ENCODE measurements at regions of chr10 and their contacts with region 1.

Region 1: DNA sequence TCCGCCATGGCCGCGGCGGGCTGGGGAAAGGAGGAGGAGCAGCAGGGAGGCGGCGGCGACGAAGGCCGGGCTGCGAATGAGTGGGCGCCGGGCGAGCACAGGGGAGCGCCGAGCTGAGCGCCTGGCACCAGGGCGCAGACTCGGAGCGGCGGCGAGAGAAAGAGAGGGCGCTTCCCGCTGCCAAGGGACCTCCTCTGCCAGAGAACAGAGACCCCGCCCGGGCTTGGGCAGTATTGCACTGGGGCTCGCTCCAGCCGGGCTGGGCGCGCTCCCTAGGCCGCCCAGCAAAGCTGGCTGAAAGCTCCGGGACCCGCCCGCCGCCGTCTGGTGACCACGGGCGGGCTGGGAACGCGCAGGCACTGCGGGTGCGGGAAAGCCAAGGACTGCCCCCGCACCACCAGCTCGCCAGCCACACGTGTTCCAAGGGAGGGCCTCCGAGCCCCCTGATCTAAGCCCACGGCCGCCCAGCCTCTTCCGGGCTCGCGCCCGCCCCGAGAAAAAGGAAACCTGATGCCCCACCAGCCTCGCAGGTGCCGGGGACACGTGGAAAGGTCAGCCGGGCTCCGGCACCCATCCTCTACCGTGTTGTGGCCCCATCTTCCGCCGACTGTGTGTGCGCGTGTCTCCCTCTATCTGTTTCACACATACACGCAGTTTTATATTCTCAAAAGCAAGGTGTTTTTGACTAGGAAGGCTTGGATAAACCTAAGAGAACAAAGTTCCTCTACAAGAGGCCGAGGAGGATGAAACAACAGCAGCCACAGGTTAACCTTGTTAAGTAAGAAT is at the start of gene CCDC6:
- DNase-seq: peak; percentile 87
- CTCF ChIP-seq: peak; percentile 71

Region 2: DNA sequence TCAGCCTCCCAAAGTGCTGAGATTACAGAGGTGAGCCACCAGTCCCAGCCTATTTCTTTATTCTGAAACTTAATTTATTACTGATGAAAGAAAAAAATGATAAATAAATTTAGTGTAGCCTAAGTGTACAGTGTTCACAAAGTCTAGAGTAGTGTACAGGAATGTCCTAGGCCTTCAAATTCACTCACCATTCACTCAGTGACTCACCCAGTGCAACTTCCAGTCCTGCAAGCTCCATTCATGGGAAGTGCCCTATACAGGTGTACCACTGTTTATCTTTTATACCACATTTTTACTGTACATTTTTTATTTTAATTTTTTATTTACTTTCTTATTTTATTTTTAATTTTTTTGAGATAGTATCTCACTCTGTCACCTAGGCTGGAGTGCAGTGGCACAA is 165.6 kb before region 1 on chr10:
- CTCF ChIA-PET with region 1: no interaction called
- POLR2A ChIA-PET with region 1: no interaction called
- DNase-seq: no peak
- CTCF ChIP-seq: no peak

Region 3: GRCh38 chr10:59793919-59794318 is 112.7 kb before region 1 on chr10:
- CTCF ChIA-PET with region 1: no interaction called
- POLR2A ChIA-PET with region 1: no interaction called
- DNase-seq: no peak
- CTCF ChIP-seq: no peak

Region 4: DNA sequence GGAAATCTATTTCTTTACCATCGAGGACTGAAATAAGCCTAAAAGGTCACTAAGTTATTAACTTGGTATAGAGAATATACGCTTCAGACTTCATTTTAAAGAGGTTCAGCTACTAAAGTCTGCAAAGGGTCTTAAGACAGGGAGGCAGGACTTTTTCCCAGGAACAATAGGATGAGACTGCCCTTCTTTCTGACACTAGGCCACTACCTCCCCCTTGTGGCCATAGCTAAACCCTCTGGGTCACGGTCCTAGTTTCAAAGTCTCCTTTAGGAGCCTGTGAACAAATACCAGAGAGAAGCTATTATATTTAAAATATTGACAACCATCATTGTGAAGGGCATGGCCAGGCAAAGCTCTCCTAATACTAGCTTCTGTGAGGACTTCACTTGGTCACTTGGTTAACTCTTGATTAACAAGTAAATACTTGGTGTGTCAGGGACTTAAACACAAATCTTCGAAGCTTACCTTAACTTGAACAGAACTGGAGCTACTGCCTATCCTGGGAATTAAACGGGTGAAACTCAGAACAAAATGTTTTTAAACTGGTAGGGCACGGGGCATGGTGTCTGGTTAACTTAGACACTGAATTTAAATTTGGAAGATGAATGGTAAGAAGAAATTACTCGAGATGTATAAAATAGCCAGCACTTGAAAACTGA is 75.9 kb before region 1 on chr10:
- CTCF ChIA-PET with region 1: interaction called, 50 read pairs
- POLR2A ChIA-PET with region 1: no interaction called
- DNase-seq: no peak
- CTCF ChIP-seq: peak; percentile 58

Region 5: DNA sequence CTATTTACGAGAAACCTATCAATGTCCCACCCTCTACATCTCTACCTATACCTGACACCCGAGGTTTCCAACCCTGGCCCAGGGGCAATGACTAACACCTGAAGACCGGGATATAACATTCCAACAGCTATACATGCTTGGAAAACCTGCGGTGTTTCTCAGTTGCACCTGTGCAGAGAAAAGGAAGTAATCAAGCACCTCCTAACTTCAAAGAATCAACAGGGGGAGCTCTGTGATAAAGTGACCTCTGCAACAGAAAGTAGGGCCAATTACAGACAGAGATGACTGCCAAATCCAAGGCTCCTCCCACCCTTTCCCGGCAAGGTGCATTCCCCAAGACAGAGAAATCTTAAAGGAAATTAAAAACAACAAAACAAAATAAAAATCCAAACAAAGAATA is 41.5 kb before region 1 on chr10:
- CTCF ChIA-PET with region 1: interaction called, 73 read pairs
- POLR2A ChIA-PET with region 1: no interaction called
- DNase-seq: peak; percentile 37
- CTCF ChIP-seq: peak; percentile 50

Region 6: DNA sequence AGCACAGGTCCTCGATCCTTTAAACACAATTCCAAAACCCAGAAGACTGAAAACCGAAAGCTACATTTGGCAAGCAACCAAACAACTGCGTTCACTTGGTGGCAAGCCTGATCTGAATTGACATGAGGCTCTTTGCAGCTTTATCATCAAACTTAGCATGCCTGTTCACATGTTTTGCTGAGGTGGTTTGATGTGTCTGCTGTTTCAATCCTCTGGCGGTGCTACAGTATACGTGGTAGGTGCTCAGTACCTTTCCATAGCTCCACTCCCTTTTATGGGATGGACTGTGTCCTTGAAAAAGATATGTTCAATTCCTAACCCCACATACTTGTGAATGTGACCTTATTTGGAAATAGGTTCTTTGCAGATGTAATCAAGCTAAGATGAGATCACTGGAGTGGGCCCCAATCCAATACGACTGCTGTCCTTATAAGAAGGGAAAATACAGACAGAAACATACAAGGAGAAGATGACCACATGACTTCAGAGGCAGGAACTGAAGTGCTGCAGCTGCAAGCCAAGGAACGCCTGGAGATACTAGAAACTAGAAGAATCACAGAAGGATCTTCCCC is 33.6 kb before region 1 on chr10:
- CTCF ChIA-PET with region 1: interaction called, 73 read pairs
- POLR2A ChIA-PET with region 1: no interaction called
- DNase-seq: no peak
- CTCF ChIP-seq: no peak

Region 7: DNA sequence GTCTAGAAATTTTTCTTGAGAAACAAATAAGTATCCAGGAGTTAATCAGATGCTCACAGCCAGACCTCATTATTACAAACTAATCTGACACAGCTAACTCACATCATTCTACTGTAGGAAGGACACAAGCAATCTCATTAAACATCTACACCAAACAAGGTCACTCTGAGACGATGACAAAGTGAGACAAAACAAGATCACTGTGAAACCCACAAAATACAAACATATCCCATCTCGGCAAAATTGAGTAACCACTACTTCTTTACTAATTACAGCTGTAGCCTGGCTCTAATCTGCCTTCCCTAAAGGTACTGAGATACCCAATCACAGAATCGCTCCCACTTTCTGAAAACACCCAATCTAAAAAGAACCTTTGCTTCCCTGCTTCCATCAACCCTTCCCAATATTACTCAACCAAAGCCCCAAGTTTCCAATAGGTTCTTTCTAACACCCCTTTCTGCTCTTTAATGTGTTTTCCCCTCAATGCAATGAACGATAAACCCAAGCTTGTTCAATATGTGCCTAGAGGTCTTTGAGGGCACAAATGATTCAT is 27.2 kb before region 1 on chr10:
- CTCF ChIA-PET with region 1: interaction called, 16 read pairs
- POLR2A ChIA-PET with region 1: no interaction called
- DNase-seq: no peak
- CTCF ChIP-seq: no peak

Region 8: DNA sequence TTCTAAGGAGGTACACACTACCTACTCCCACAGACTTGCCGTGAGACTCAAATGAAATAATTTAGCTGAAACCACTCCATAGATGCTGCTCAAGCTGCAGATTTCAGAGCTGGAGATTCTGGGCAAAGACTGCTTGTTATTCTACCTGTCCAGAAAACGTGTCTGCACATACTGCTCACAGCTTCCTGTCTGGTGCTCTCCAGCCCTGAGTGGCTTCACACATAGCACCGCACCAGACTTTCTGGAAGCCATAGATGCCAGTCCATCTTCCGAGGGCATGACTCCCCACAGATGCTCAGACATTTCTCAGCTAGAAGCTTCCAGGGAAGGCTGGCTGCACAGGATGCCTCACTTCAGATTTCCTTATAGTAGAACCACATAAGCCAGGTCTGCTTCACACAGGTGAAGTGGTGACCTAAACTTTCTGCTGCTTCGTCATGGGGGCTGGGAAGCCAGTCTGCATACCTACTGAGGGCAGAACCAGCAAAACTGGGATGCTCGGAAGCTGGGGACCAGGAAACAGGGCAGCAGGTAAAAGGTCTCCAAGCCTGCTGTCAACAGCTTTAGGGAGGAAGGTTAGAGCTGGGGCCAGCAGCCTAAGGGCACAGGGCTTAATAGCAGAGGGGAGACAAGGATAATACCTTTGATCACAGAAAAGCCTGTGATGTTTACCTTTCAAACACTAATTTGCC is 18.5 kb before region 1 on chr10:
- CTCF ChIA-PET with region 1: interaction called, 23 read pairs
- POLR2A ChIA-PET with region 1: no interaction called
- DNase-seq: no peak
- CTCF ChIP-seq: no peak

Region 9: GRCh38 chr10:59895629-59896116 is 10.9 kb before region 1 on chr10:
- CTCF ChIA-PET with region 1: interaction called, 17 read pairs
- POLR2A ChIA-PET with region 1: no interaction called
- DNase-seq: no peak
- CTCF ChIP-seq: no peak

Region 10: DNA sequence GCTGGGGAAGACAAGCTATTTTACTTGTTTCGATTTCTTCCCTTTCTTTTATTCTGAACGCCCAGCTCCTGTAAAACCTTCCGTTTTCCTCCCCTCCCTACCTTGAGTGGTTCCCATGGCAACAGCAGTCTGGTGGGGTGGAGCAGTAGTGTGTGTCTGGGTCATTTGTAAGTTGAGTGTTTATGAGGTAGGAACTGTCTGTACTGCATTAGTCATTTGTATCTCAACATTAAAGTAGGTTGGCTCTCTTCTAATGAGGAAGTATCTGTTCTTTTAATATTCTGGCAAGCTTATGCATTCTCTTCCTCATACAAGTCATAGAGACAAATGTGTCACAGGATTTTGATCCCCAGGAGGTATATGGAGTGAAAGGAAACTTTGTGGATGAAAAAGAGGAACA is 85.1 kb after region 1 on chr10:
- CTCF ChIA-PET with region 1: no interaction called
- POLR2A ChIA-PET with region 1: no interaction called
- DNase-seq: peak; percentile 14
- CTCF ChIP-seq: no peak